Naive thymus-derived CD4-positive, alpha-beta T cell (primary cell): ENCODE measurements at regions of chrX and their contacts with region 1.

Region 1: GRCh38 chrX:119871599-119872395 is at the starts of genes NDUFA1 and RNF113A:
- DNase-seq: peak; percentile 65 to 90 (median 88)
- ATAC-seq: peak; percentile 95
- H3K4me3 ChIP-seq: peak within 1 kb of the TSS; percentile 90
- H3K4me3 Mint-ChIP-seq: peak within 1 kb of the TSS; percentile 86 to 100 (median 97)
- H3K27ac ChIP-seq: peak within 1 kb of the TSS; percentile 88
- H3K27ac Mint-ChIP-seq: peak within 1 kb of the TSS; percentile 94 to 100 (median 99)
- H3K4me1 ChIP-seq: peaks cover 7 to 8% of the 10 kb centered on the region in 2 donors
- H3K4me1 Mint-ChIP-seq: peaks cover 6 to 35% (median 15%) of the 10 kb centered on the region in 7 donors
- H3K27me3 ChIP-seq: no peaks in the 10 kb centered on the region
- H3K27me3 Mint-ChIP-seq: no peaks in the 10 kb centered on the region
- total RNA-seq, gene NDUFA1: 41.6 to 94.7 (median 46.8) TPM
- total RNA-seq, gene RNF113A: 25.5 to 40.6 (median 34.7) TPM

Region 2: GRCh38 chrX:118502161-118502789 is 1369.5 kb before region 1 on chrX:
- CTCF ChIA-PET with region 1: no interaction called
- POLR2A ChIA-PET with region 1: no interaction called
- intact Hi-C with region 1: no loop called
- DNase-seq: peak in 3 of 9 donors; percentile 19 to 30 (median 26)
- ATAC-seq: peak; percentile 65
- H3K4me3 ChIP-seq: no peak overlapping the region
- H3K4me3 Mint-ChIP-seq: peak overlapping the region; percentile 55 to 91 (median 78)
- H3K27ac ChIP-seq: peak overlapping the region; percentile 64
- H3K27ac Mint-ChIP-seq: peak overlapping the region; percentile 87 to 98 (median 94)
- H3K4me1 ChIP-seq: peaks cover 33 to 77% of the 10 kb centered on the region in 2 donors
- H3K4me1 Mint-ChIP-seq: peaks cover 34 to 74% (median 60%) of the 10 kb centered on the region in 7 donors
- H3K27me3 ChIP-seq: no peaks in the 10 kb centered on the region
- H3K27me3 Mint-ChIP-seq: no peaks in the 10 kb centered on the region

Region 3: DNA sequence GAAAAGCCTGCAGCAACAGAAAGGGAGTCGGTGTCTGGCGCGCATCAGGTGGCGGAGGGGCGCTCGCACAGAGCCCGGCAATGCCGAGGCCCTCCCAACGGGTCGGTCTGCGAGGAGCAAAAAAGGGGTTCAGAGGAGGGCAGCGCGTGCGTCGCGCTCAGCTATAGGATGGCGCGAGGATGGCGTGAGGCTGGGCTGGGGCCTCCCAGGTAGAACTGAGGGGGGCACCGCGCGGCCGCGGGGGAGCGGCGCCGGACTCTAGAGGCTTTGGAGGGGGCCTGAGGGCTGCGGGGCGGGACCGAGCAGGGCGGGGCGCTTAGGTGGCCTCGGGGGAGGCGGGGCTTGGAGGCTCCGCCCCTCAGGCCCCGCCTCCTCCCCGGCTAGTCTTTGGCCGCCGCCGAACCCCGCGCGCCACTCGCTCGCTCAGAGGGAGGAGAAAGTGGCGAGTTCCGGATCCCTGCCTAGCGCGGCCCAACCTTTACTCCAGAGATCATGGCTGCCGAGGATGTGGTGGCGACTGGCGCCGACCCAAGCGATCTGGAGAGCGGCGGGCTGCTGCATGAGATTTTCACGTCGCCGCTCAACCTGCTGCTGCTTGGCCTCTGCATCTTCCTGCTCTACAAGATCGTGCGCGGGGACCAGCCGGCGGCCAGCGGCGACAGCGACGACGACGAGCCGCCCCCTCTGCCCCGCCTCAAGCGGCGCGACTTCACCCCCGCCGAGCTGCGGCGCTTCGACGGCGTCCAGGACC is 635.8 kb before region 1 on chrX and contains the start of gene PGRMC1:
- CTCF ChIA-PET with region 1: no interaction called
- POLR2A ChIA-PET with region 1: no interaction called
- intact Hi-C with region 1: loop called (anchors 5 kb)
- DNase-seq: peak; percentile 60 to 84 (median 79)
- ATAC-seq: peak; percentile 98
- H3K4me3 ChIP-seq: peak within 1 kb of the TSS; percentile 68
- H3K4me3 Mint-ChIP-seq: peak within 1 kb of the TSS; percentile 83 to 93 (median 90)
- H3K27ac ChIP-seq: peak within 1 kb of the TSS; percentile 74
- H3K27ac Mint-ChIP-seq: peak within 1 kb of the TSS; percentile 49 to 88 (median 79)
- H3K4me1 ChIP-seq: peaks cover 8 to 11% of the 10 kb centered on the region in 2 donors
- H3K4me1 Mint-ChIP-seq: peaks cover 13 to 36% (median 31%) of the 10 kb centered on the region in 7 donors
- H3K27me3 ChIP-seq: no peaks in the 10 kb centered on the region
- H3K27me3 Mint-ChIP-seq: peaks cover 0 to 29% (median 0%) of the 10 kb centered on the region in 5 donors
- total RNA-seq, gene PGRMC1: 9.5 to 28.4 (median 11.9) TPM

Region 4: DNA sequence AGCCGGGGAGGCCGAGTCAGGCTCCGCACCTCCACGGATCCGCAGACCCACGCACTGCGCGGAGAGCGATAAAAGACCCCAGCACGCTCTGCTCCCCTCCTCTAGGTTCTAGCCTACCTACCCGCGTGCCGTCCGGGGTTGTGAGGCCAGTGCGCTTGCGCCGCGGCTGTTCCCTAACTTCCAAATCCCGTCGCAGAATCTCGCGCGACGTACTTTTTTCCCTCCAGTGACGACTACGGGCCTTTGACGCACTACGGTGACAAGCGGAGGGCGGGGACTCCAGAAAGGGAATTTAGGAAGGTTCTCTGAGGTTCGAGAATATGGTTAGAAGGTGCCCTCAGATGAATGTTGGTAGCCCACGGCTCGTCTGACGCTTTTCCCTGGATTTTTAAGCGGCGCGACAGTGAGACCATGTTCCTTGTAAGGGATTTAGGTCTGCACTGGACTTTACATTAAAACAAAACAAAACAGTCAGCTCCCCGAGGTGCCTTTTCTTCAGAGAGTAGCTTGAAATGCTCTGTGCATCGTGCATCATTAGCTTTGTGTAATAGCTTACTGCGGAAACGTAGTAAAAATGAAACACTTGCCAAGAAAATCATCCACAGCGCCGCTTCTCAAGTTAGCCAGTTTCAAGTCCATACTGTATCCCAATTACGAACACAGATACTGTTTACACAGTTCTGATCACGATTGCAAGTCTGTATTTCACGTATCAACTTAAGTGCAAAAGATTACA is 265.3 kb before region 1 on chrX and contains the start of gene NKRF:
- CTCF ChIA-PET with region 1: no interaction called
- POLR2A ChIA-PET with region 1: interaction called, 11 read pairs
- intact Hi-C with region 1: loop called (anchors 5 kb)
- DNase-seq: peak; percentile 76 to 92 (median 88)
- ATAC-seq: peak; percentile 88
- H3K4me3 ChIP-seq: peak within 1 kb of the TSS; percentile 71
- H3K4me3 Mint-ChIP-seq: peak within 1 kb of the TSS; percentile 93 to 100 (median 94)
- H3K27ac ChIP-seq: peak within 1 kb of the TSS; percentile 90
- H3K27ac Mint-ChIP-seq: peak within 1 kb of the TSS; percentile 91 to 99 (median 98)
- H3K4me1 ChIP-seq: peaks cover 5 to 11% of the 10 kb centered on the region in 2 donors
- H3K4me1 Mint-ChIP-seq: peaks cover 6 to 48% (median 39%) of the 10 kb centered on the region in 7 donors
- H3K27me3 ChIP-seq: no peaks in the 10 kb centered on the region
- H3K27me3 Mint-ChIP-seq: peaks cover 0 to 4% (median 0%) of the 10 kb centered on the region in 5 donors
- total RNA-seq, gene NKRF: 9.9 to 16.4 (median 14.0) TPM

Region 5: GRCh38 chrX:119753571-119754257 is 118.1 kb before region 1 on chrX:
- CTCF ChIA-PET with region 1: no interaction called
- POLR2A ChIA-PET with region 1: interaction called, 9 read pairs
- intact Hi-C with region 1: loop called in 1 of 2 experiments (anchors 1 kb)
- DNase-seq: peak in 7 of 9 donors; percentile 77 to 89 (median 80)
- ATAC-seq: peak; percentile 83
- H3K4me3 ChIP-seq: no peak overlapping the region
- H3K4me3 Mint-ChIP-seq: peak overlapping the region; percentile 40 to 81 (median 70)
- H3K27ac ChIP-seq: peak overlapping the region; percentile 76
- H3K27ac Mint-ChIP-seq: peak overlapping the region; percentile 90 to 99 (median 96)
- H3K4me1 ChIP-seq: peaks cover 38 to 39% of the 10 kb centered on the region in 2 donors
- H3K4me1 Mint-ChIP-seq: peaks cover 21 to 50% (median 40%) of the 10 kb centered on the region in 7 donors
- H3K27me3 ChIP-seq: no peaks in the 10 kb centered on the region
- H3K27me3 Mint-ChIP-seq: no peaks in the 10 kb centered on the region

Region 6: DNA sequence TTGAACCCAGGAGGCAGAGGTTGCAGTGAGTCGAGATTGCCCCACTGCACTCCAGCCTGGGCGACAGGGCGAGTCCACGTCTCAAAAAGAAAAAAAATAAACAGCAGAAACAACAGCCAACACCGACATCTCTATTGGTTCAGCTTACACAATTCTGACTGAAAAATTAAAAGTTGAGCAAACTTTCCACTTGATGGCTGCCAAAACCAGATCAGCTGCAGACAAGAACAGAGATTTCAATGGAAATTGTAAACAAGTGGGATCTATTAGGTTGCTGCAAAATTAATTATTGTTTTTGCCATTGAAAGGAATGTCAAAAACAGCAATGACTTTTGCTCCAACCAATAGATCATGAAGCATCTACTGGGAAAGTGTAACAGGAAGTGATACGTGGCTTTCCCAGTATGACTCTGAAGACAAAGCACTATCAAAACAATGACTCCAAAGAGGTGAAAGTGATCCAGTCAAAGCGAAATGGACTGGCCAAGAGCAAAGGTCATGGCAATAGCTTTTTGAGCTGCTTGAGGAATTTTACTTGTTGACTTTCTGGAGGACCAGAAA is 45.3 kb before region 1 on chrX:
- CTCF ChIA-PET with region 1: no interaction called
- POLR2A ChIA-PET with region 1: interaction called, 4 read pairs
- intact Hi-C with region 1: loop called in 1 of 2 experiments (anchors 1 kb)
- DNase-seq: no peak
- ATAC-seq: no peak
- H3K4me3 ChIP-seq: no peak overlapping the region
- H3K4me3 Mint-ChIP-seq: no peak overlapping the region
- H3K27ac ChIP-seq: no peak overlapping the region
- H3K27ac Mint-ChIP-seq: peak overlapping the region in 5 of 9 donors; percentile 12 to 73 (median 56)
- H3K4me1 ChIP-seq: no peaks in the 10 kb centered on the region
- H3K4me1 Mint-ChIP-seq: peaks cover 0 to 23% (median 16%) of the 10 kb centered on the region in 7 donors
- H3K27me3 ChIP-seq: no peaks in the 10 kb centered on the region
- H3K27me3 Mint-ChIP-seq: no peaks in the 10 kb centered on the region

Region 7: GRCh38 chrX:119887721-119888425 is 16.1 kb after region 1 on chrX:
- CTCF ChIA-PET with region 1: interaction called, 3 read pairs
- POLR2A ChIA-PET with region 1: interaction called, 3 read pairs
- intact Hi-C with region 1: loop called in 1 of 2 experiments (anchors 2 kb)
- DNase-seq: peak; percentile 30 to 61 (median 38)
- ATAC-seq: peak; percentile 87
- H3K4me3 ChIP-seq: no peak overlapping the region
- H3K4me3 Mint-ChIP-seq: peak overlapping the region in 9 of 10 donors; percentile 38 to 67 (median 51)
- H3K27ac ChIP-seq: no peak overlapping the region
- H3K27ac Mint-ChIP-seq: no peak overlapping the region
- H3K4me1 ChIP-seq: no peaks in the 10 kb centered on the region
- H3K4me1 Mint-ChIP-seq: peaks cover 0 to 11% (median 7%) of the 10 kb centered on the region in 7 donors
- H3K27me3 ChIP-seq: no peaks in the 10 kb centered on the region
- H3K27me3 Mint-ChIP-seq: no peaks in the 10 kb centered on the region

Region 8: DNA sequence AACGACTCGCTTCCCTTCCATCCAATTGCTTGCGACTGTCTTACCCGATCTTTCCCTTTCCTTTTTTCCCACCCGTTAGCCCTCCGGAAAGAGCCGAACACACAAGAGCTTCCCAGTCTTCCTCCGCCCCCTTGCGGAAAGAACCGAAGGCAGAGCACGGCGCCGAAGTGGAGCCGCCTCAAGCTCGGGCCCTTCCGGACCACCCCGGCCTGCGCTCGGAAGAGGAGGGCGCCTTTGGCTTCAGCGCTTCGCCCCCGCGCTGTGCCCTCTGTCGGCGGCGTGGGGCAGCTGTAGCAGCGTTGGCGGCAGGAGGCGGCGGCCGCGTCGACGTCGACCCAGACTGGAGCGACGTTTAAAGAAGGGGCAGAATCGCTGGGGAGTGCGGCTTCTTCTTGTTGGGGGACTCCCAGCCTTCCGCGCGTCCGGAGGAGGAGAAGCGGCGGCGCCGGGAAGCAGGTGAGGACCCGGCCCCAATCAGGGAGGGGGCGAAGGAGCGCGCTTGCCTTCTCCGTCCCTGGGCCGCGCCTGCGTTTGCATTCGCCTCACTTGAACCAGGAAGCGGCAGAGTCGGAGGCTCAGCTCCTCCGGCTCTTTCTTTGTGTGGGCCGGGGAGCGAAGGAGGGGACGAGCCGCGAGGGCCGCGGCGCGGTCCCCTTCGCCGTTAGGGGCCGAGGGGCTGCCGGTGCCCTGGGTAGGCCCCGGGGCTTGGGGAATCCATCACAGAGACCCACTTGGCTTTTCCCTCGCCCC is 378.9 kb after region 1 on chrX and contains the start of gene ZBTB33:
- CTCF ChIA-PET with region 1: no interaction called
- POLR2A ChIA-PET with region 1: no interaction called
- intact Hi-C with region 1: loop called in 1 of 2 experiments (anchors 5 kb)
- DNase-seq: peak; percentile 69 to 88 (median 82)
- ATAC-seq: peak; percentile 100
- H3K4me3 ChIP-seq: peak within 1 kb of the TSS; percentile 79
- H3K4me3 Mint-ChIP-seq: peak within 1 kb of the TSS; percentile 84 to 97 (median 94)
- H3K27ac ChIP-seq: peak within 1 kb of the TSS; percentile 96
- H3K27ac Mint-ChIP-seq: peak within 1 kb of the TSS; percentile 93 to 98 (median 96)
- H3K4me1 ChIP-seq: peaks cover 0 to 7% of the 10 kb centered on the region in 2 donors
- H3K4me1 Mint-ChIP-seq: peaks cover 6 to 42% (median 28%) of the 10 kb centered on the region in 7 donors
- H3K27me3 ChIP-seq: no peaks in the 10 kb centered on the region
- H3K27me3 Mint-ChIP-seq: peaks cover 0 to 4% (median 0%) of the 10 kb centered on the region in 5 donors
- total RNA-seq, gene ZBTB33: 15.3 to 30.7 (median 26.3) TPM